ENCODE measurements at regions of chr17 and their contacts with region 1.

Region 1: DNA sequence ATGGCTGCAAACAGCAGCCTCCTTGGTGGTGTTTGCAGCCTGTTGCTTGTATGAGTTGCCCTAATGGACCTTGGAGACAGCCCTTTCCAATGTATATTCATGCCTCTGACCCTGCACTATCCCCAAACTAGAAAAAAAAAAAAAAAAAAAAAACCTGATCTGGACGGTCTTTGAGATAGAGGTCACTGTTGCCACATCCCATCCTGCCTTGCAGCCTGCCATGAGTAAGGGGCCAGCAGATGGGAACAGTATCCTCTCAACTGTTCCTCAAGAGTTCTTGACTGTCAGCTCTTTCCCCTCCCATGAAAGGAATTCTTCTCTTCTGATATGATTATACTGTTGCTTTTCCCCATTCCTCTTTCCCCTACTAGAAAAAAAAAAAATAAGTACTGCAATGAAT is 152.4 kb downstream of the SSH2 start:
- DNase-seq: no peak
- H3K4me3 ChIP-seq: no peak overlapping the region
- H3K27ac ChIP-seq: peak overlapping the region in 1 of 2 experiments; percentile 29; a peak in 1 of 4 replicates
- H3K4me1 ChIP-seq: peaks cover 0 to 11% of the 10 kb centered on the region in 2 experiments; a peak in 2 of 4 replicates
- H3K27me3 ChIP-seq: no peaks in the 10 kb centered on the region
- CTCF ChIP-seq: no peak
- EP300 ChIP-seq: no peak
- RAD21 ChIP-seq: no peak

Region 2: GRCh38 chr17:29579866-29580771 is 197.5 kb before region 1 on chr17:
- CTCF ChIA-PET with region 1: interaction called, 11 read pairs
- POLR2A ChIA-PET with region 1: no interaction called
- DNase-seq: peak; percentile 96
- H3K4me3 ChIP-seq: peak overlapping the region in 1 of 2 experiments; percentile 32; a peak in 1 of 4 replicates
- H3K27ac ChIP-seq: peak overlapping the region in 1 of 2 experiments; percentile 53; a peak in 2 of 4 replicates
- H3K4me1 ChIP-seq: peaks cover 2 to 17% of the 10 kb centered on the region in 2 experiments; a peak in 2 of 4 replicates
- H3K27me3 ChIP-seq: no peaks in the 10 kb centered on the region
- CTCF ChIP-seq: peak; percentile 85
- EP300 ChIP-seq: no peak
- RAD21 ChIP-seq: peak; percentile 92

Region 3: GRCh38 chr17:29617125-29617480 is 160.6 kb before region 1 on chr17:
- CTCF ChIA-PET with region 1: interaction called, 12 read pairs
- POLR2A ChIA-PET with region 1: no interaction called
- DNase-seq: peak; percentile 88
- H3K4me3 ChIP-seq: no peak overlapping the region
- H3K27ac ChIP-seq: no peak overlapping the region; a peak in 1 of 4 replicates
- H3K4me1 ChIP-seq: peaks cover 20 to 44% of the 10 kb centered on the region in 2 experiments; a peak in 3 of 4 replicates
- H3K27me3 ChIP-seq: no peaks in the 10 kb centered on the region
- CTCF ChIP-seq: peak; percentile 47
- EP300 ChIP-seq: no peak
- RAD21 ChIP-seq: peak; percentile 31

Region 4: DNA sequence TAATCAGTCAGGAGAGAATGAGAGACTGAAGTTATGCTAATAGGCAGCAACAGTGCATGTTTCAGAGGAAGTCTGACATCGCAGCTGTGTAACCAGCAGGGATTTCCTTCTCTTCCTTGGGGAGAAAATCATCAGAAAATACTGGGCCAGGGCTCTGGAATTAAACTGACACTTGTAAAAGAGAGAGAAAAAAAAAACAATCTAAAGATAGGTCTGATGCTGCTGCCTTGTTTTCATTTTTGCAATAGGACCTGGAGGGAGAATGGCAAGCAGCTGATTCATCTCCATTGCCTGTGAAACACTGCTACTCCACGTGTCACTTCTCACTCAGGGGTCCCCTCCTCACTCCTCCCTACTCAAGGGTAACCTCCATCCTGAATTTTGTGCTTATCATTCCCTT is 137.2 kb before region 1 on chr17:
- CTCF ChIA-PET with region 1: interaction called, 53 read pairs
- POLR2A ChIA-PET with region 1: no interaction called
- DNase-seq: no peak
- H3K4me3 ChIP-seq: no peak overlapping the region
- H3K27ac ChIP-seq: peak overlapping the region; percentile 52 to 89
- H3K4me1 ChIP-seq: peaks cover 54% of the 10 kb centered on the region in 2 experiments; a peak in 3 of 4 replicates
- H3K27me3 ChIP-seq: no peaks in the 10 kb centered on the region
- CTCF ChIP-seq: no peak
- EP300 ChIP-seq: no peak
- RAD21 ChIP-seq: no peak

Region 5: DNA sequence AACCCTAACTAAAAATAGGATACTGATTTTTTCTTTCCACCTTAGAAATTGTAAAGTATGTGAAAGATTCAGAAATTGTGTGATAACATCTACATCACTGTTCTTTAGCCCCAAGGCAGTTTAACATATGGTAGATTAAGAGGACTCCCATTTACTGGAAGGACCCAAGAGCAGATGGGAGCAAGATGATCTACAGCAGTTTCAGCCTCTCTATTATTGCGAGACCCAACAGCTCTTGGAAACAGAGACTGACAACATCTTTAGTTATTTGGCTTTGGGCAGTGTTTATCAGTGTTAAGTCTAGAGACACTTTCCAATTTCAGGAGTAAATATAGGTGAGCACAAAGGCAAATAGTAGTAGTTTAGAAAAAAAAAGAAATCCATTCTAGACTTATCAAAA is 30.0 kb before region 1 on chr17:
- CTCF ChIA-PET with region 1: interaction called, 14 read pairs
- POLR2A ChIA-PET with region 1: no interaction called
- DNase-seq: peak; percentile 50
- H3K4me3 ChIP-seq: no peak overlapping the region
- H3K27ac ChIP-seq: peak overlapping the region in 1 of 2 experiments; percentile 99; a peak in 2 of 4 replicates
- H3K4me1 ChIP-seq: peaks cover 22 to 37% of the 10 kb centered on the region in 2 experiments; a peak in 3 of 4 replicates
- H3K27me3 ChIP-seq: no peaks in the 10 kb centered on the region
- CTCF ChIP-seq: no peak
- EP300 ChIP-seq: peak in 1 of 2 experiments; percentile 90; a peak in 2 of 4 replicates
- RAD21 ChIP-seq: no peak; the same call in 1 of the 2 replicates

Region 6: DNA sequence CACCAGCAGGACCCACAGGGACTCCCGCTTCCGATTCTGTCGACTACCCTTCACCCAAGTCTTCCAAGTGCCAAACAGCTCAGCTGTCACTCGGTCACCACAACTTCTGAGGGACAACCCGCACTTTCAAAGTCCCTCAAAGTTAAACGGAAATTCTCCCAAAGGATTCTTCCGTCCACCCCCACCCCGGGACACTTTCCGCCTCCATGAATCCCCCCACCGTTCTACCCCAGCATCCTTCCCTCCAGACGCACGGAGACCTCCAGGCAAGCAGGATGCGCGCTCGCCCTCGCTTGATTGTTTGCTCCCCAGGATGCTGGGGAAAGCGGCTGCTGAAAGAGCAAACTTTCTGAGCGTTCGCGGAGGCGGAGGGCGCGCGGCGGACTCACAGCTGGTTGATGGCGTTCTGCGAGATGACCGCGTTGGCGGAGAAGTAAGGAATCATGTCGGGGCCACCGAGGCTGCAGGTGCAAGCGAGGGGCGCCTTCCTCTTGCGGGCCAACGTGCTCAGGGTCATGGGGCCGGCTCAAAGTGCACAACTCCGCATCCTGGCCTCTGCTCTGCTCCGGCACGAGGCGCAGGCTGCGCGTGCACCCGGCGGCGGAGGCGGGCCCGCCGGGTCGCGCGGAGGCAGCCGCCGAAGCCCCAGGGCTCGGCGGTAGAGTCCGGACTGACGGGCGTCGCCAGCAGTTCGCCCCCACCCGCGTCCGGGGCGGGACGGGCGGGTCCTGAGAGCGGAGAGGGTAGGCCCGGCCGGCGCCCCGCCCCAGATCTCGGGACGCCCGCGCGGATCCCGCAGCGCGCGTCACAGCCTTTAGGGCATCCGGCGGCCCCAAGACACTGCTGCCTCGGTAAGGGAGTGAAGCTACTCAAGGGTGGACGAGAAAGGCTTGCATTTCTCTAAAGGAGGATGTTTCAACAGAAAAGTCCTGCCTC is 16.6 kb before region 1 on chr17:
- CTCF ChIA-PET with region 1: interaction called, 32 read pairs
- POLR2A ChIA-PET with region 1: interaction called, 3 read pairs
- DNase-seq: peak; percentile 96
- H3K4me3 ChIP-seq: peak overlapping the region; percentile 80 to 87
- H3K27ac ChIP-seq: peak overlapping the region; percentile 74 to 88
- H3K4me1 ChIP-seq: peaks cover 13 to 15% of the 10 kb centered on the region in 2 experiments; a peak in 3 of 4 replicates
- H3K27me3 ChIP-seq: no peaks in the 10 kb centered on the region
- CTCF ChIP-seq: no peak
- EP300 ChIP-seq: no peak
- RAD21 ChIP-seq: no peak

Region 7: DNA sequence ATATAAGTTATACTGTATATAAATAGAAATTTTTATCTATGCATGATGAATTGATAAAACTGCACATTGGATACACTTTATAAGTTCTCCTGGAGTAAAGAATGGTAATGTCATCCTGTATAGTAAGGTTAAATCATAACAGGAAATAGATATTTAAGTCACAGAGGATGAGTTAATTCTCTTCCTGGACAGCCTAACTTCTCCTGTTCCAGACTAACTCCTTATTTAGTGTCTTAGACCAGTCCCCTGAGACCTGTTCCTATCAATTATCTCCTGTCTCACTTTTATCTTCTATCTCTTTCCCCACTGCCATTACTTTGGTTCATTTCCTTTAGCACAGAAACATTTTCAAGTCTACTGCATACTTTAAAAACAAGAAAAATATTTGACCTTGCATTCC is 105.8 kb after region 1 on chr17:
- CTCF ChIA-PET with region 1: no interaction called
- POLR2A ChIA-PET with region 1: no interaction called
- DNase-seq: no peak
- H3K4me3 ChIP-seq: no peak overlapping the region
- H3K27ac ChIP-seq: peak overlapping the region in 1 of 2 experiments; percentile 44; a peak in 2 of 4 replicates
- H3K4me1 ChIP-seq: peaks cover 0 to 18% of the 10 kb centered on the region in 2 experiments; a peak in 1 of 4 replicates
- H3K27me3 ChIP-seq: no peaks in the 10 kb centered on the region
- CTCF ChIP-seq: no peak
- EP300 ChIP-seq: no peak
- RAD21 ChIP-seq: no peak